Activated naive CD4-positive, alpha-beta T cell treated with anti-CD3 and anti-CD28 coated beads for 36 hours (primary cell): ENCODE measurements at regions of chr15 and their contacts with region 1.

Region 1: GRCh38 chr15:65610871-65611718 is at the start of gene INTS14:
- DNase-seq: peak; percentile 98
- H3K4me3 Mint-ChIP-seq: peak within 1 kb of the TSS; percentile 98
- H3K27ac Mint-ChIP-seq: peak within 1 kb of the TSS; percentile 96
- H3K4me1 Mint-ChIP-seq: peaks cover 45% of the 10 kb centered on the region
- H3K27me3 Mint-ChIP-seq: no peaks in the 10 kb centered on the region
- total RNA-seq, gene INTS14: 41.2 to 43.4 TPM

Region 2: DNA sequence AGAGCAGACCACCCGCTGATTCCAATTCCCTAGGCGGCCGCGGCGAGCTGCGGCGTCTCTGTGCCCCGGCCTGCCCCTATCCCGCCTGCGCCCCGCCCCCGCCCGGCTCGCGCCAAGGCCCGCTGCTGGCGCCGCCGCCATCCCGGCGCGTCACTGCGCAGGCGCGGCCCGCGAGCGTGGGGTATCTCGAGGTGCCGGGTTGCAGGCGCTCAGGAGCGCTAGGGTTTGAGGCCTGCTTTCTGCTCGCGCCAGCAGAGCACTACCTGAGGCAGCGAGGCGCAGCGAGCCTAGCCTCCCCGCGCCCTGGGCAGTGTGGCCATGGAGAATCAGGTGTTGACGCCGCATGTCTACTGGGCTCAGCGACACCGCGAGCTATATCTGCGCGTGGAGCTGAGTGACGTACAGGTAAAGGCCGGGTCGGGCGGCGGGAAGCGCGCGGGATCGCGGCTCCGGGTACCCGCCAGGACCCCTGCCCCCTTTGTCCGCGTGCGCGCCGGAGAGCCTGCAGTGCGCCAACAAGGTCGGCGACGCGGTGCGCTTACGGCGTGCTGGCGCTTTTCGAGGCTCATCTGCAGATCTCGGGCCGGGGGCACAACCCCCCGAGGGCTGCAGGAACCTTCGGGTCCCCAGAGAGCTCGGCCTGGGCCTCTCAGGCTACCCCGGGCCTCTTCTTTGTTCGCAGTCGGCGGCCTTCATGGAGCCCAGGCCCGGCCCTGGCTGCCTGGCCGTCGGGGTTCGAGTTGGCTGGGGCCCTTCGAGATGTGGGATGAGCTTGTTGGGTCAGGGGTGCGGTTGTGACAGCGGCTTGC is 80.6 kb before region 1 on chr15 and contains the start of gene HACD3:
- CTCF ChIA-PET with region 1: no interaction called
- intact Hi-C with region 1: loop called (anchors 2 kb)
- DNase-seq: peak; percentile 89
- H3K4me3 Mint-ChIP-seq: peak within 1 kb of the TSS; percentile 83
- H3K27ac Mint-ChIP-seq: peak within 1 kb of the TSS; percentile 69
- H3K4me1 Mint-ChIP-seq: peaks cover 32% of the 10 kb centered on the region
- H3K27me3 Mint-ChIP-seq: no peaks in the 10 kb centered on the region
- total RNA-seq, gene HACD3: 29.1 to 30.1 TPM

Region 3: GRCh38 chr15:66196602-66197001 is 585.5 kb after region 1 on chr15:
- CTCF ChIA-PET with region 1: no interaction called
- intact Hi-C with region 1: loop called (anchors 10 kb)
- DNase-seq: no peak
- H3K4me3 Mint-ChIP-seq: no peak overlapping the region
- H3K27ac Mint-ChIP-seq: no peak overlapping the region
- H3K4me1 Mint-ChIP-seq: no peaks in the 10 kb centered on the region
- H3K27me3 Mint-ChIP-seq: no peaks in the 10 kb centered on the region